Gastrocnemius medialis (tissue), 4 donors: ENCODE measurements at regions of chr1 and their contacts with region 1.

Region 1: DNA sequence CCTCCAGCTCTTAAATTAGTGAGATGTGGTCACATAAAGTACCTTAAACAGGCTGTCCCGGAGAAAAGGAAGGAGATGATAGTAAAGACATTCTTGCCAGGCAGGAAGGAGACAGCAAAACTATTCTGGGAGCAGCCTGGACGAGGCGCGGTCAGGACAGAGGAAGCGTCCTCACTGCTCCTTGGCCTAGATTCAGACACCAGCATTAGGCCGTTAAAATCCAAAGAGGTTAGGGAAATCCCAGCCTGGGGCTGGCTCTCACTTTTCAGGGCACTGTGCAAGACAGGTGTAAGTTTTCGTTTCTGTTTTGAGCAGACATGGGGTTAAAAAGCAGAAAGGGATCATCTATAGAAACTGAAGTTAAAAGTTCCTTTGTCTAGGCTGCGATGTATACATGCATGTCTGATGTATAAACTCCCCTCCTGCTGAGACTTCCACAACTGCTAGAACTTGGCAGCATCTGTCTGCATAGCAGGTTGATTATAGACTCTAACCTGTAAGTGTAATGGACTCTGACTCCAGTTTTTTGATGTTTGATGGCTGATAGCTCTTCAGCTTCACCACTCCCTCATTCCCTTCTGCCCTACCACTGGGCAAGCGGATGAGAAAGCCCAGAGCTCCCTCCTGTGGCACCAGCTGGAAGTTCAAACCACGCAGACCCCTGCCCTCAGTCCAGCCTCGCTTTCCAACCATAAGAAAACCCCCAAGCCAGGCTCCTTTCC is 21.5 kb downstream of the STPG1 start:
- DNase-seq: peak; percentile 28 to 54
- ATAC-seq: peak; percentile 80 to 87
- H3K4me3 ChIP-seq: peak overlapping the region; percentile 32 to 37 (median 34)
- H3K27ac ChIP-seq: peak overlapping the region; percentile 77 to 85 (median 82)
- H3K4me1 ChIP-seq: peaks cover 6 to 19% of the 10 kb centered on the region in 2 donors
- H3K27me3 ChIP-seq: no peaks in the 10 kb centered on the region
- CTCF ChIP-seq: peak; percentile 68 to 83 (median 76)
- POLR2A ChIP-seq: no peak

Region 2: GRCh38 chr1:24070821-24071393 is 321.1 kb before region 1 on chr1:
- in situ Hi-C with region 1: loop called in 1 of 4 experiments (anchors 25 kb)
- intact Hi-C with region 1: no loop called
- DNase-seq: peak; percentile 74 to 83
- ATAC-seq: peak; percentile 76 to 82
- H3K4me3 ChIP-seq: no peak overlapping the region
- H3K27ac ChIP-seq: peak overlapping the region; percentile 76 to 89 (median 80)
- H3K4me1 ChIP-seq: peaks cover 28 to 43% of the 10 kb centered on the region in 2 donors
- H3K27me3 ChIP-seq: no peaks in the 10 kb centered on the region
- CTCF ChIP-seq: peak; percentile 82 to 95 (median 94)
- POLR2A ChIP-seq: no peak

Region 3: GRCh38 chr1:24150234-24151174 is 241.5 kb before region 1 on chr1:
- in situ Hi-C with region 1: no loop called
- intact Hi-C with region 1: loop called (anchors 1 kb)
- DNase-seq: peak; percentile 73 to 81
- ATAC-seq: peak; percentile 91 to 95
- H3K4me3 ChIP-seq: peak overlapping the region in 2 of 4 donors; percentile 28 to 34
- H3K27ac ChIP-seq: no peak overlapping the region
- H3K4me1 ChIP-seq: peaks cover 8 to 9% of the 10 kb centered on the region in 2 donors
- H3K27me3 ChIP-seq: no peaks in the 10 kb centered on the region
- CTCF ChIP-seq: peak; percentile 73 to 92 (median 87)
- POLR2A ChIP-seq: no peak

Region 4: GRCh38 chr1:24351918-24352627 is 40.0 kb before region 1 on chr1:
- in situ Hi-C with region 1: no loop called
- intact Hi-C with region 1: no loop called
- DNase-seq: no peak
- ATAC-seq: no peak
- H3K4me3 ChIP-seq: no peak overlapping the region
- H3K27ac ChIP-seq: no peak overlapping the region
- H3K4me1 ChIP-seq: no peaks in the 10 kb centered on the region
- H3K27me3 ChIP-seq: no peaks in the 10 kb centered on the region
- CTCF ChIP-seq: no peak
- POLR2A ChIP-seq: no peak